Right ventricle myocardium inferior (tissue), 1 donor: ENCODE measurements at regions of chr2 and their contacts with region 1.

Region 1: GRCh38 chr2:217988014-217988839 is 14.6 kb downstream of the TNS1 start:
- DNase-seq: peak; percentile 83
- ATAC-seq: peak; percentile 88

Region 2: DNA sequence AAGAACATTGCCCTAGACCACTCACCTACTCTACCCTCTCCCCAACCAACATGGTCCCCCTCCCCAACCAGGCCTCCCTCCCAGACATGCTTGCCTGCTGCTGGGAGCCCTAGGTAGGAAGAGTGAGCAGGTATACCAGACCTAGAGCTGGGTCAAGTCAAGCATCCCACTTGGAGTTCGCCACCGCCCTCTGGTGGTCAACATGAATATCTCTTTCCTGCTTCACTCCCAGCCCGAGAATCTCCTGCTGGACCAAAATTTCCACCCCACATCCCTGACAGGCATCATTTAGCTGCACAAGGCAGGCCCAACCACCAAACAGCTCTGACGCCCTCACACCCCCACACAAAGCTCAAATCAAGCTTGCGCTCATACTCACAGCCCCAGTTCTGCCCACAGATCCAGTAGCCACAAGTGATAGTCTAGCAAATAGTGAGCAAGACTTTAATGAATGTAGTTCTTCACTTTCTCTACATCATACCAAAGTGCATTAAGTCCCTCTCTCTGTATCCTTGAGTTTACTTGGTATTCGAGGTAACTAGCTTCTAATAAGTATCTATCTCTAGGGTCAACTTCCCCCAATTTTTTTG is 101.4 kb before region 1 on chr2:
- intact Hi-C with region 1: loop called (anchors 1 kb)
- DNase-seq: peak; percentile 78
- ATAC-seq: peak; percentile 35

Region 3: DNA sequence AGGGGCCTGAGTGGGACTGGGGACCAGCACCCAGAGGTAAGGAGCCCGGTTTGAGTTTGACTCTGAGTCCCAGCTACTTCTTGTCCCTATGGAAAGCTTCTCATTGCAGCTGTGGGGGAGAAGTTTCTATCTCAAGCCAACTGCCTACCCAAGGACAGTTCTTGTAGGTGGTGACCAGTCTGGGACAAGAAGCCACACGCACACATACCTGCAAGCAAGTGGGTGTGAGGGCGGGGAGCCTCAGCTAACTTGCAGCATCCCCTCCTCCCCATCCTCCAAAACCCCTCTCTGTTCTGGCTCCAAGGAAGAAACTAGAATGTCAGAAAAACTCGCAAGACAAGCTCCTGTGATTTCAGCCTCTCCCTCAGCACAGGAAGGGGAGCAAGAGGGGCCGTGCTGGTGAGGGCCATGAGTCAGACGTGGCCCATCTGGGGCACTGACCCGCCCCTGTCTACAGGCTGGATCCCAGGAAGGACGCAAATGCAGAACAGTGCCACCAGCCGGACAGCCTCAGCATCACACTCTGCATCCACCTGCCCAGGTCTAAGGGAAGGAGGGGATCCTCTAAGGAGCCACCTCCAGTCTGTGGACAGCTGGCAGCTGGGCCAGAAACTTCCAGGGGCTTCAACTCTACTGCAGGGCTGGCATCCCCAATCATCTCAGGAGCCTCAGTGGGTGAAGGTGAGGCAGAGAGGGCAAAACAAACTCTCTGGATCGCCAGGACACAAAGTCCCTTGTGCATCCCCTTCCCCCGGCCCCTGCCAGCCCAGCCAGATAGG is 88.8 kb before region 1 on chr2:
- intact Hi-C with region 1: loop called (anchors 5 kb)
- DNase-seq: peak; percentile 81
- ATAC-seq: peak; percentile 21

Region 4: DNA sequence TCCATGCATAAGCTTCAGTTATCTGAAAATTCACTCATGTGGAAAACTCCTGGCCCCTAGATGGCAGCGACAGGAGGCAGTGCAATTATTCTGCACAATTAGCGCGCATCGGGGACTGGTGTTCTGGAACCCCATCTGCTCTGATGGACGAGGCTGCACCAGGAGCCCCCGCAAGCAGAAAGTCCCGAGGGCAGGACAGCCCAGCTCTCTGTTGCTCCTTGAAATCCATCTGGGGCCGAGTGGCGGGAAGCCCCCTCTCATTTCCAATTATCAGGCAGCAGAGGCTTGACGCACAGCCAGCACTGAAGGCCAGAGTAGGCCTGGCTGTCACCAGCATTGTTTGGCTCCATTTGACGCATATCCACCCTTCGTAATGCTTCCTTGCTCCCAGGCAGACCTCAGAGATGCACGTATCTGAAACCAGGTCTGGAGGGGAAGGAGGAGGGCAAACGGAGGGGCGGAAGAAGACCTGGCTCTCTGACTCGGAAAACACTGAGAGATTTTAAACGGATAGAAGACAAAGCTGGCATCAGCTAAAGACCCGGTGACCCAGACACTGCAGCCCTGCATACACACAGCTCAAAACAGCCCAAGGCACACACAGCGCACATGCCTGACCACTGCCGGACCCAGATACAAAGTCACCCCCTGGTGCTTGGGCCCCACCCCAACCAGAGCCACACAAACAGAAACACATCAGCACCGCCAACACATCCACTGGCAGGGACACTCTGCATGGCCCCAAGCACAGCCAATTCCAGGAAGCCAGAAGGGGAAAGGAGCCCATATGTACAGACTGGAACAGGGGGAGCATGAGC is 55.2 kb before region 1 on chr2:
- intact Hi-C with region 1: no loop called
- DNase-seq: peak; percentile 68
- ATAC-seq: peak; percentile 9

Region 5: GRCh38 chr2:217943446-217944389 is 44.5 kb before region 1 on chr2:
- intact Hi-C with region 1: loop called (anchors 1 kb)
- DNase-seq: peak; percentile 92
- ATAC-seq: peak; percentile 91

Region 6: GRCh38 chr2:217964275-217965161 is 23.7 kb before region 1 on chr2:
- intact Hi-C with region 1: no loop called
- DNase-seq: no peak
- ATAC-seq: peak; percentile 62

Region 7: DNA sequence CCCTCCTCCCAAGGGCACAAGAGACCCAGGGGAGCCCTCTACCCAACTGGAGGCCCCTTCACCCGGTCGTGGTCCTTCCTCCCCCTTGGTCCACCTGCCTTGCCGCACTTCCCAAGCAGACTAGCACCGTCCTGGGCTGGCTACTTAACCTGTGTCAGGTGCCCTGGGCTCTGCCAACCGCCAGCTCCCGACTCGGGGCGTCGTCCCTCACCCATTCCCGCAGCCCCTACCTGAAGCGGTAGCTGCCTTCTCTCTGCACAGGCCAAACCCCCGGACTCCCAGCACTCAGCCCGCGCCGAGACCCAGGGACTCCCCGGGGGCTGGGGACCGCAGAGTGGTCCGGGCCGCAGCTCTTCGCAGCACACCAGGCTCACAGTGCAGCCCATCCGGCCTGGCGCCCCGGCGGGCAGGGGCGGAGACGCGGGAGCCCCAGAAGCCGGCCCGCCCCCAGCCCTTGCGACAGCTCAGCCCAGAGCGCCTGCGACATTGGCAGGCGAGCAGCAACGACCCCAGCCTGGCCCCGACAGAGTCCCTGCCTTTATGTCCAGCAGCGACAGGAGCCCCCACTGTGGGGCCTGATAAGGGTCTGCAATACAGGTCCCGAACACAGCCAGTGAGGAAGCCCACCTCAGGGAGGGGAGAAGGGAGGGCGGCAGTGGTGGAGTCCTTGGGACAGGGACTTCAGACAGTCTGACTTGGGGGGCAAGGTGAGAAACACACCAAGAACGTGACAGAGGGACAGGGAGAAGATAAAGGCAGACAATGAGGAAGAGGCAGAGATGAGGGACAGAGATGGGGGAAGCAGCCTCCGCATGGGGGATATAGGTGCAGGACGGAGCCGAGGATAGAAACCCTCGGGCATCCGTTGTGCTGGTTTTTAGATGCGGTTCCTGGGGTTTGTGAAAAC is 45.6 kb after region 1 on chr2:
- intact Hi-C with region 1: loop called (anchors 2 kb)
- DNase-seq: no peak
- ATAC-seq: no peak

Region 8: DNA sequence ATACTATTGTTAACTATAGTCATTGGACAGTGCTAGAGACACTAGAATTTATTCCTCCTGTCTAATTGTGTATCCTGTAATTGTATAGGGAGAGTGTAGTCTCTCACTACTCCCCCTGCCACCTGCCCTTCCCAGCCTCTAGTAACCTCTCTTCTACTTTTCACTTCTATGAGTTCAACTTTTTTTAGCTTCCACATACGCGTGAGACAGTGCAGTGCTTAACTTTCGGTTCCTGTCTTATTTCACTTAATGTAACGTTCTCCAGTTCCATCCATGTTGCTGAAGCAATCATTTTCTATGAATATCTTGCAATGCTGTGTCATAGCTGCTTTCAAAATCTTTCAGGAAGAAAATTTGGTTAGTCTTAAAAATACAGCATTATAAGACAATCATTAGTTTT is 58.0 kb after region 1 on chr2:
- intact Hi-C with region 1: no loop called
- DNase-seq: no peak
- ATAC-seq: peak; percentile 60